Activated CD8-positive, alpha-beta memory T cell treated with anti-CD3 and anti-CD28 coated beads, Interleukin-2, amount 10 ng/mL, durations not matched to agents 7 days and 5 days (primary cell): ENCODE measurements at regions of chr19 and their contacts with region 1.

Region 1: DNA sequence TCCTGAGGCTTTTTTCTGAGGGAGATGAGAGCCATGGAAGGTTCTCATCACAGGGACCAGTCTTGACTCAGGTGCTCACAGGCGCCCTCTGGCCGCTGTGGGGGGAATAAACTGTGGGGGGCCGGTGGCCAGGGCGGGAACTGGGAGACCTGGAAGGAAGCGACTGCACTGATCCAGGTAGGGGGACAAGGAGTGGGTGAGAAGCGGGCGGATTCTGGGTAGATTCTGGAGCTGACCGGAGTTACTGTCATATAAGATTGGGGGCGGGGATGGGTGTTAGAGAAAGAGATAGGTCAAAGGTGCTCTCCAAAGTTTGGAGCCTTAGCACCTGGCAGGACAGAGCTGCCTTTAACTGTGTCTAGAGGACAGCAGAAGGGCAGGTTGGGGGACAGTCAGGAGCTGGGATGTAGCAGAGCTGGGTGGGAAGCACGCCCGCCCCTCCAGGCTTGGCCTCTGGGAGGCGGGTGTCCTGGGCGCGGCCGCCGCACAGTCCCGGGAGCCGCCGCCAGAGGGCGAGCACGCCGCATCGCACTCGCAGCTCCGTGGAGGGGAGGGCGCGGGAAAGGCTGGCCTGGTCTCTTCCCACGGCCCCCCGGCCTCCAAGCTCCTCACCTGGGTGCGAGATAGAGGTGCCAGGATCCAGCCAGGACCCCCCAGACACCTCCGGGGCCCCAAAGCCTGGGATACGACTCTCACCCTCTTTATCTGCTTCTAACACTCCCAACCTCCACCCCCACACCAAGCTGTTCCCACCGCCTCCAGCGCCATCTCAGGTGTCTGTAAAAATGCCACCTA is 4.2 kb upstream of the DAND5 start:
- DNase-seq: peak; percentile 88
- ATAC-seq: peak; percentile 98
- H3K4me3 Mint-ChIP-seq: peak overlapping the region; percentile 74
- H3K27ac Mint-ChIP-seq: peak overlapping the region; percentile 86
- H3K4me1 Mint-ChIP-seq: peaks cover 8% of the 10 kb centered on the region
- H3K27me3 Mint-ChIP-seq: peaks cover 3% of the 10 kb centered on the region

Region 2: GRCh38 chr19:12890787-12891552 is 74.2 kb before region 1 on chr19 and contains the start of gene GCDH:
- CTCF ChIA-PET with region 1: interaction called, 163 read pairs
- DNase-seq: peak; percentile 99
- ATAC-seq: peak; percentile 96
- H3K4me3 Mint-ChIP-seq: peak within 1 kb of the TSS; percentile 99
- H3K27ac Mint-ChIP-seq: peak within 1 kb of the TSS; percentile 90
- H3K4me1 Mint-ChIP-seq: peaks cover 30% of the 10 kb centered on the region
- H3K27me3 Mint-ChIP-seq: no peaks in the 10 kb centered on the region
- total RNA-seq, gene GCDH: 38.7 to 46.1 TPM

Region 3: GRCh38 chr19:12924616-12925276 is 40.5 kb before region 1 on chr19:
- CTCF ChIA-PET with region 1: no interaction called
- DNase-seq: no peak
- ATAC-seq: no peak
- H3K4me3 Mint-ChIP-seq: no peak overlapping the region
- H3K27ac Mint-ChIP-seq: no peak overlapping the region
- H3K4me1 Mint-ChIP-seq: peaks cover 3% of the 10 kb centered on the region
- H3K27me3 Mint-ChIP-seq: no peaks in the 10 kb centered on the region

Region 4: DNA sequence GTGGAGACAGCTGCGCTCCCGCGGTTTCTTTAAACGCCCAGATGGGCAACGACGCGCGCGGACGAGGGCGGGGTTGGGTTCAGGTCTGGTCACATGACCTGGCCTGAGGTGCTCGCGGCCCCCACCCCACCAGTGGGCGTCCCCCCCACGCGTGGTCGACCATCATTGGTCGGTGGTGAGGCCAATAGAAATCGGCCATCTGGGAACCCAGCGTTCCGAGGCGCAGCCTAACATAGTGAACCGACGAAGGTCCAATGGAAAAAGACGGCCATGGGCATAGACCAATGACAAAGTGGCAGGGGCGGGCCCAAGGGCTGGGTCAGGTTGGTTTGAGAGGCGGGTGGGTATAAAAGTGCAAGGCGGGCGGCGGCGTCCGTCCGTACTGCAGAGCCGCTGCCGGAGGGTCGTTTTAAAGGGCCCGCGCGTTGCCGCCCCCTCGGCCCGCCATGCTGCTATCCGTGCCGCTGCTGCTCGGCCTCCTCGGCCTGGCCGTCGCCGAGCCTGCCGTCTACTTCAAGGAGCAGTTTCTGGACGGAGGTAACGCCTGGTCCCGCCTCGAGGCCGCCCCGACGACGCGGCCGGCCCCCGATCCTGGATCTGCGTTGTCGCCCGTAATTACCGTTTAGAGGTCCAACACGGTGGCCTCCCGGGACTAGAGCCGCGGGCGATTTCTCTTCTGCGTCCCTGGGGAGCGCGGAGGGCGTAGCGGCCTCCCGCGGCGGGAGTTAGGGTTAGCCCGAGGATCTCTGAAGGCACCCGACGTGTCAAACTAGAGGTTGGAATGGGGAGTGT is 26.8 kb before region 1 on chr19 and contains the start of gene CALR:
- CTCF ChIA-PET with region 1: interaction called, 23 read pairs
- DNase-seq: peak; percentile 100
- ATAC-seq: peak; percentile 92
- H3K4me3 Mint-ChIP-seq: peak within 1 kb of the TSS; percentile 100
- H3K27ac Mint-ChIP-seq: peak within 1 kb of the TSS; percentile 95
- H3K4me1 Mint-ChIP-seq: peaks cover 65% of the 10 kb centered on the region
- H3K27me3 Mint-ChIP-seq: no peaks in the 10 kb centered on the region
- total RNA-seq, gene CALR: 745 to 898 TPM

Region 5: GRCh38 chr19:13033819-13034611 is 68.8 kb after region 1 on chr19:
- CTCF ChIA-PET with region 1: interaction called, 17 read pairs
- DNase-seq: peak; percentile 63
- ATAC-seq: peak; percentile 73
- H3K4me3 Mint-ChIP-seq: no peak overlapping the region
- H3K27ac Mint-ChIP-seq: no peak overlapping the region
- H3K4me1 Mint-ChIP-seq: peaks cover 16% of the 10 kb centered on the region
- H3K27me3 Mint-ChIP-seq: peaks cover 11% of the 10 kb centered on the region

Region 6: DNA sequence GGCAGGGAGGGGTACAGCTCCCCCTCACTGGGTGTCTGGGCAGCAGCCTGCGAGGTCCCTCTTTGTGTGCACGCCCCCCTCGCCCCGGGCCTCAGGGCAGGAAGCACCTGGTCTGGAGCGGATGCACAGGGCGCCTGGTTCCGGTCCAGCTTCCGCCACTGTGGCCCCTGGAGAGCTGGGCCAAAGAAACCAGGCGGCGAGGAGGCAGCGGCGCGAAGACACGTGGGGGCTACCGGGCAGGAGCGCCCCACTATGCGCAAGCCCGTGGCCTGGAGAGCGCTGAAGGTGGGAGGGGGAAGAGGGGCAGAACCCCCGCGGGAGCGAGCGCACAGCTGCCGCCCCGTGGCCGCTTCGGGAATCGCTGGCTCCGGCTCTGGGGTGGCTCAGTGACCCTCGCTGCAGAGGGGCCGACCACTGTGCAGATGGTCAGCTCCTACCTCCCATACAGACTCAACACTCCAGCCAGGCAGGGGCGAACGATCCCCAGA is 139.2 kb after region 1 on chr19:
- CTCF ChIA-PET with region 1: interaction called, 33 read pairs
- DNase-seq: peak; percentile 72
- ATAC-seq: peak; percentile 38
- H3K4me3 Mint-ChIP-seq: peak overlapping the region; percentile 78
- H3K27ac Mint-ChIP-seq: peak overlapping the region; percentile 83
- H3K4me1 Mint-ChIP-seq: peaks cover 30% of the 10 kb centered on the region
- H3K27me3 Mint-ChIP-seq: peaks cover 5% of the 10 kb centered on the region